ENCODE measurements at regions of chr12 and their contacts with region 1.

Region 1: GRCh38 chr12:46209914-46210872 is 58.6 kb downstream of the SLC38A1 start:
- DNase-seq: peak in 8 of 9 donors; percentile 47 to 81 (median 68)
- ATAC-seq: peak; percentile 66
- H3K4me3 ChIP-seq: no peak overlapping the region
- H3K4me3 Mint-ChIP-seq: peak overlapping the region; percentile 47 to 76 (median 69)
- H3K27ac ChIP-seq: peak overlapping the region; percentile 78
- H3K27ac Mint-ChIP-seq: peak overlapping the region; percentile 89 to 100 (median 98)
- H3K4me1 ChIP-seq: peaks cover 65 to 72% of the 10 kb centered on the region in 2 donors
- H3K4me1 Mint-ChIP-seq: peaks cover 45 to 98% (median 96%) of the 10 kb centered on the region in 7 donors
- H3K27me3 ChIP-seq: no peaks in the 10 kb centered on the region
- H3K27me3 Mint-ChIP-seq: no peaks in the 10 kb centered on the region

Region 2: GRCh38 chr12:46198913-46199312 is 11.3 kb before region 1 on chr12:
- CTCF ChIA-PET with region 1: no interaction called
- POLR2A ChIA-PET with region 1: interaction called, 5 read pairs
- intact Hi-C with region 1: loop called in 1 of 2 experiments (anchors 1 kb)
- DNase-seq: no peak
- ATAC-seq: no peak
- H3K4me3 ChIP-seq: no peak overlapping the region
- H3K4me3 Mint-ChIP-seq: peak overlapping the region in 1 of 10 donors; percentile 27
- H3K27ac ChIP-seq: no peak overlapping the region
- H3K27ac Mint-ChIP-seq: peak overlapping the region in 8 of 9 donors; percentile 3 to 90 (median 71)
- H3K4me1 ChIP-seq: no peaks in the 10 kb centered on the region
- H3K4me1 Mint-ChIP-seq: peaks cover 4 to 42% (median 40%) of the 10 kb centered on the region in 7 donors
- H3K27me3 ChIP-seq: no peaks in the 10 kb centered on the region
- H3K27me3 Mint-ChIP-seq: no peaks in the 10 kb centered on the region

Region 3: GRCh38 chr12:46303039-46303666 is 93.0 kb after region 1 on chr12:
- CTCF ChIA-PET with region 1: interaction called, 7 read pairs
- POLR2A ChIA-PET with region 1: interaction called, 4 read pairs
- intact Hi-C with region 1: loop called in 1 of 2 experiments (anchors 1 kb)
- DNase-seq: peak in 7 of 9 donors; percentile 40 to 66 (median 57)
- ATAC-seq: peak; percentile 91
- H3K4me3 ChIP-seq: no peak overlapping the region
- H3K4me3 Mint-ChIP-seq: no peak overlapping the region
- H3K27ac ChIP-seq: no peak overlapping the region
- H3K27ac Mint-ChIP-seq: peak overlapping the region in 2 of 9 donors; percentile 1 to 7
- H3K4me1 ChIP-seq: no peaks in the 10 kb centered on the region
- H3K4me1 Mint-ChIP-seq: peaks cover 5 to 20% (median 15%) of the 10 kb centered on the region in 7 donors
- H3K27me3 ChIP-seq: no peaks in the 10 kb centered on the region
- H3K27me3 Mint-ChIP-seq: peaks cover 0 to 22% (median 0%) of the 10 kb centered on the region in 5 donors

Region 4: GRCh38 chr12:46364777-46365580 is 154.8 kb after region 1 on chr12:
- CTCF ChIA-PET with region 1: no interaction called
- POLR2A ChIA-PET with region 1: no interaction called
- intact Hi-C with region 1: no loop called
- DNase-seq: no peak
- ATAC-seq: no peak
- H3K4me3 ChIP-seq: no peak overlapping the region
- H3K4me3 Mint-ChIP-seq: peak overlapping the region in 3 of 10 donors; percentile 27 to 56 (median 45)
- H3K27ac ChIP-seq: peak overlapping the region; percentile 38
- H3K27ac Mint-ChIP-seq: peak overlapping the region in 7 of 9 donors; percentile 34 to 78 (median 61)
- H3K4me1 ChIP-seq: peaks cover 31 to 50% of the 10 kb centered on the region in 2 donors
- H3K4me1 Mint-ChIP-seq: peaks cover 51 to 92% (median 86%) of the 10 kb centered on the region in 7 donors
- H3K27me3 ChIP-seq: no peaks in the 10 kb centered on the region
- H3K27me3 Mint-ChIP-seq: no peaks in the 10 kb centered on the region

Measured in naive thymus-derived CD4-positive, alpha-beta T cell (primary cell).